ENCODE measurements at regions of chr17 and their contacts with region 1.

Region 1: DNA sequence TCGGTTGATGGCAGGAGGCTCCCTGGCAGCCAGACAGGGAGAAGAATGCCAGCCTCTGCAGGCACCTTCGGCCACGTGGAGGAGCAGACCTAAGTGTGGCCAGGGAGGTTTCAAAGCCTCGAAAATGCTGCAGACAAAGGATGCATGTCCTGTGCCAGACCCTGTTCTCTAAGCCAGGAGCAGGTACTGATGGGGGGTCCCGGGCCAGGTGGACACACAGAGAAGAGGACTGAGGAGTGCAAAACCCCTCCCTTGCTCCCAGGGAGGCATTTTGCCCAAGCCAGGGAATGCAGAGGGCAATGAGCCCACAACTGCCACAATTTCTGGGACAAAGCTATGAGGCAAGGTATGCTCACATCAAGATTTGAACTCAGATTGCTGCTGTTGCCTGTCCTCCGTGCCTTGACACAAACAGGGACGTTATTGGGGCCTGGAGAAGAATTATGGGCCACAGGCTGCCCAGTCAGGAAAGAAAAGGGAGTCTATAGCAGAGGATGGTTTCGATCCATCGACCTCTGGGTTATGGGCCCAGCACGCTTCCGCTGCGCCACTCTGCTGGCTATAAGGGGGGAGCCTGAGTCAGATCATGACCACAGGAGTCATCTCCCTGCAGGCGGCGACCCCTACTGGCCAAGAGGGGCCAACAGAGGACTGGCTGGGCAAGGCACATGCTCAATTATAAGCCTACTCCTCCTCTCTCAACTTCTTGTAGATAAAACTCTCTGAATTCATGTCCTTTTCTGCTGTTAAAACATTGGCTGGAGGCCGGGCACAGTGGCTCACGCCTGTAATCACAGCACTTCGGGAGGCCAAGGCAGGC is 25.1 kb upstream of the FOXK2 start:
- DNase-seq: peak; percentile 96
- H3K4me3 Mint-ChIP-seq: no peak overlapping the region
- H3K27ac Mint-ChIP-seq: peak overlapping the region; percentile 87
- H3K4me1 Mint-ChIP-seq: peaks cover 39% of the 10 kb centered on the region
- H3K27me3 Mint-ChIP-seq: no peaks in the 10 kb centered on the region
- CTCF ChIP-seq: peak; percentile 98

Region 2: DNA sequence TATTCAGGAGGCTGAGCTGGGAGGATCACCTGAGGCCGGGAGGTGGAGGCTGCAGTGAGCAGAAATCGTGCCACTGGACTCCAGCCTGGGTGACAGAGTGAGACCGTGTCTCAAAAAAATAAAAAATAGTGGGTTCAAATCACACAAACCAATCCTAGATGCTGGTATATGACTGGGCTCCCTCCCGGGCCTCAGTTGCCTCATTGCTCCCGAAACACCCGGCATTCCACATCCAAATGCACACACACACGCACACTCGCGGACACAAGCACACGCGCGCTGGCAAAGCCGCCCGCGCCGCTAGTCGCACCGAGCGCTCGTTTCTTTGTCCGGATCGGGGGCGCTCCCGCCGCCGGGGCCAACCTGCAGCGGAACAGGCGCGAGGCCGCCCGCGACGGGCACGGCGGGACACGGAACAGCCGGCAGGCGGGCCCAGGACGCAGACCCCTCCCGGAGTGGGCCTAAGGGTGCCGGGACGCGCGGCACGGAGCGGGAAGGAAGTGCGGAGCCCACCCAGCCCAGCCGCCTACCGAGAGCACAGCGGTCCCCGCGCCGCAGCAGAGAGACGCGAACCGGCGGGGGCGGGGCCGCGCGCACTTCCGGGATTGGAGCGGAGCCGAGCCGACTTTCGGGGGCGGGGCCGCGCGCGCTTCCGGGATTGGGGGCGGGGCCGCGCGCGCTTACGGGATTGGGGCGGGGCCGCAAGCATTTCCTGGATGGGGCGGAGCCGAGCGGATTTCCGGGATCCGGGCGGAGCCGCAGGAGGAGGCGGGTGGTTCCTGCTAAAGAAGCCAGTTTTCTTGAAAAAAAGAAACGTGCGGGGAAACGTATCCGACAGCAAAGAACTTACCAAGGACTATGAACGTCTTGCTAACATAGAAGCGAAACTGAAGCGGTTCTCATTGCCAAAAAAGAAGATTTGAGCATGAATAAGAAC is 44.0 kb before region 1 on chr17 and contains the start of gene CYBC1:
- CTCF ChIA-PET with region 1: no interaction called
- POLR2A ChIA-PET with region 1: interaction called, 3 read pairs
- intact Hi-C with region 1: loop called (anchors 1 kb)
- DNase-seq: peak; percentile 86
- H3K4me3 Mint-ChIP-seq: peak within 1 kb of the TSS; percentile 80
- H3K27ac Mint-ChIP-seq: peak within 1 kb of the TSS; percentile 94
- H3K4me1 Mint-ChIP-seq: no peaks in the 10 kb centered on the region
- H3K27me3 Mint-ChIP-seq: no peaks in the 10 kb centered on the region
- CTCF ChIP-seq: no peak
- total RNA-seq, gene CYBC1: 38.0 and 45.4 TPM in 2 replicates

Region 3: GRCh38 chr17:82536512-82537201 is 42.2 kb after region 1 on chr17:
- CTCF ChIA-PET with region 1: interaction called, 3 read pairs
- POLR2A ChIA-PET with region 1: interaction called, 34 read pairs
- intact Hi-C with region 1: no loop called
- DNase-seq: peak; percentile 72
- H3K4me3 Mint-ChIP-seq: peak overlapping the region; percentile 60
- H3K27ac Mint-ChIP-seq: peak overlapping the region; percentile 97
- H3K4me1 Mint-ChIP-seq: peaks cover 53% of the 10 kb centered on the region
- H3K27me3 Mint-ChIP-seq: no peaks in the 10 kb centered on the region
- CTCF ChIP-seq: no peak